ENCODE measurements at regions of chr4 and their contacts with region 1.

Region 1: DNA sequence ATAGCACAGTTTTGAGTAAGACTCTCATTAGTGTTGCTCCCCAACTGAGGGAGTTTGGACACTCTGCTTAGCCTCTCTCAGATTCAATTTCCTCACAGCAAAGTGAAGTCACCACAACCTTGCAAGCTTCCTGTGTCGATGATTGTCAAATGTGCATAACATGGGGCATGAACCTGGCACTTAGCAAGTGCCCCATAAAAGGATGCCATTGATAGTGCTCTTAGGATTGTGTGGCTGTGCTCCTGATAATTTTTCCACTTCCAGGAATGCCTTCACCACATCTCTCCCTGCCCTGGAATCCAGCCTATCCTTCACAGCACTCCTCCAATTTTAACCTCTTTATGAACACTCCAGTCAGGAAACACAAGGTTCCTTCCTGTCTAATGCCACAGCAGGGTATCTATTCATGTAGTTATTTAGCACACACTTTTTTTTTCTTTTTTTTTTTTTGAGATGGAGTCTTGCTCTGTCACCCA is 309.4 kb downstream of the PPP3CA start:
- DNase-seq: peak; percentile 44
- H3K4me3 Mint-ChIP-seq: no peak overlapping the region
- H3K27ac Mint-ChIP-seq: peak overlapping the region; percentile 52
- H3K4me1 Mint-ChIP-seq: peaks cover 27% of the 10 kb centered on the region
- H3K27me3 Mint-ChIP-seq: no peaks in the 10 kb centered on the region

Region 2: GRCh38 chr4:100569196-100569595 is 468.8 kb before region 1 on chr4:
- CTCF ChIA-PET with region 1: no interaction called
- POLR2A ChIA-PET with region 1: no interaction called
- intact Hi-C with region 1: loop called (anchors 1 kb)
- DNase-seq: peak; percentile 12
- H3K4me3 Mint-ChIP-seq: no peak overlapping the region
- H3K27ac Mint-ChIP-seq: no peak overlapping the region
- H3K4me1 Mint-ChIP-seq: peaks cover 24% of the 10 kb centered on the region
- H3K27me3 Mint-ChIP-seq: no peaks in the 10 kb centered on the region

Region 3: GRCh38 chr4:100895556-100896197 is 142.3 kb before region 1 on chr4:
- CTCF ChIA-PET with region 1: no interaction called
- POLR2A ChIA-PET with region 1: no interaction called
- intact Hi-C with region 1: loop called (anchors 5 kb)
- DNase-seq: no peak
- H3K4me3 Mint-ChIP-seq: peak overlapping the region; percentile 70
- H3K27ac Mint-ChIP-seq: peak overlapping the region; percentile 3
- H3K4me1 Mint-ChIP-seq: peaks cover 14% of the 10 kb centered on the region
- H3K27me3 Mint-ChIP-seq: no peaks in the 10 kb centered on the region

Region 4: GRCh38 chr4:101050088-101050836 is 12.3 kb after region 1 on chr4:
- CTCF ChIA-PET with region 1: interaction called, 3 read pairs
- POLR2A ChIA-PET with region 1: no interaction called
- intact Hi-C with region 1: loop called (anchors 1 kb)
- DNase-seq: no peak
- H3K4me3 Mint-ChIP-seq: no peak overlapping the region
- H3K27ac Mint-ChIP-seq: no peak overlapping the region
- H3K4me1 Mint-ChIP-seq: peaks cover 18% of the 10 kb centered on the region
- H3K27me3 Mint-ChIP-seq: no peaks in the 10 kb centered on the region

Region 5: DNA sequence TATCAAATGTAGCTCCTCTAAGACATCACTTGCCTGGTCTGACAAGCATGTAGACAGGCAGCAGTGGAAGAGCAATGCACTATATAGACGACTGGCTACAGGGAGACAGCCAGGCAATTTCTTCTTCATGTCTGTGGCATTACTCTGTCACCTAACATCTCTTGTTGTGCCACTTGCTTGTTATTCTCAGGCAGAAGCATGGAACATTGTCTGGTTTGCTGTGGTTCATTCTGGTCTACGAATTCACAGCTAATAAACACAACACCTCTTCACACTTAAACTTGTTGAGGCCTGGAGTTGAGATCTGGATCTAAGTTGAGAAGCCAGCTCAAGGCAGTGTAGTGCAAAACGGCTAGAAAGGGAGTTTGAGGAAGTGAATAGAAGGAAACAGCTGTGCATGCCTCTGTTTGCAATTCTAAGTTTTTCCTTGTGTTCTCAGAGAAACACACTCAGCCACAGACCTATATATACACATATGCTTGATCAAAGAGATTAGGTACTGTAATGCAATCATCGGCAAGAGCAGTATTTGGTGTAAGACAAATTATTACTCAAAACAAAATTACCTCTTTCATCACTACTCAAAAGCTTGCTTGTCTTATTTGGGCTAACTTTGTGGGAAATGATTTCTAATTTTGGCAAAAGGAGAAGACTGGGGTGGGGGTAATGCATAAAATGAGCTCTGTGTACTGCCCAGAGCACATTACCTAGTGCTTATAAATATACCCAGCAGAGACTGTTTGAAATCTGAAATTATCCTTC is 65.6 kb after region 1 on chr4:
- CTCF ChIA-PET with region 1: no interaction called
- POLR2A ChIA-PET with region 1: no interaction called
- intact Hi-C with region 1: loop called (anchors 1 kb)
- DNase-seq: no peak
- H3K4me3 Mint-ChIP-seq: no peak overlapping the region
- H3K27ac Mint-ChIP-seq: peak overlapping the region; percentile 42
- H3K4me1 Mint-ChIP-seq: peaks cover 19% of the 10 kb centered on the region
- H3K27me3 Mint-ChIP-seq: no peaks in the 10 kb centered on the region